H1 (cell line): ENCODE measurements at regions of chr11 and their contacts with region 1.

Region 1: DNA sequence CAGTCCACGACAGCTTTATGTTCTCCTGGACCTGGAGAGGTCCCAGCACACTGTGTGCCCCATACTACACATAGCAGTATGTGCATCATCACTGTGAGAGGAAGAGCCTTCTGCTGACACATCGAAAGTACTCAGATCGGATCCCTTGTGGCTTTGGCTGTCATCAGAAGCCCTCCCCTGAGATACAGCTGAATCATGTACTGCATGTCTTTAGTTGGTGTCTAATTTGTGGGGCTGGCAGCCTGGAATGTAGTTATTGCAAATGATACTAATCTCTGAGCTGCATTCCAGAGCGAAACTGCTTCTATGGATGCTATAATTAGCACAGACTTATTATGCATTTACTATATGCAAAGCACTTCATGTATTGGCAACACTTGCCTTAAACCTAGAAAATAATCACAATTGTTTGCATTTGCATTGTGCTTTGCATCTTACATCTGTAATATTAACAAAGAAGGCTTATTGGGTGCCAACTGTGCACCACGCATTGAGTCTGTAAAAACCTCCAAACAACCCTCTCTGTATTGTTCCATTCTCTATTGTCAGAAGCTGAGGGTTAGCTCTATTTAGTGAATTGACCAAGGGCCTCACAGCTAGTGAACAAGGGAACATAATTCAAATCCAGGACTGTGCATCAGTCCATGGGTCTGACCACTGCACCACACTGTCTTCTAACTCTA is 89.2 kb upstream of the CRTAM start:
- DNase-seq: no peak
- H3K4me3 ChIP-seq: no peak overlapping the region
- H3K27ac ChIP-seq: no peak overlapping the region
- H3K4me1 ChIP-seq: peaks cover 0 to 2% (median 0%) of the 10 kb centered on the region in 4 experiments; a peak in 1 of 7 replicates
- H3K27me3 ChIP-seq: peaks cover 0 to 5% (median 0%) of the 10 kb centered on the region in 4 experiments; a peak in 1 of 7 replicates
- CTCF ChIP-seq: no peak
- EP300 ChIP-seq: no peak
- POLR2A ChIP-seq: no peak
- RAD21 ChIP-seq: no peak

Region 2: GRCh38 chr11:122578168-122578825 is 170.8 kb before region 1 on chr11:
- CTCF ChIA-PET with region 1: no interaction called
- POLR2A ChIA-PET with region 1: no interaction called
- DNase-seq: no peak
- H3K4me3 ChIP-seq: no peak overlapping the region
- H3K27ac ChIP-seq: no peak overlapping the region
- H3K4me1 ChIP-seq: peaks cover 0 to 3% (median 0%) of the 10 kb centered on the region in 4 experiments; a peak in 2 of 7 replicates
- H3K27me3 ChIP-seq: no peaks in the 10 kb centered on the region
- CTCF ChIP-seq: peak in 2 of 3 experiments; percentile 17 to 27; a peak in 2 of 4 replicates
- EP300 ChIP-seq: no peak
- POLR2A ChIP-seq: no peak
- RAD21 ChIP-seq: peak; percentile 34 to 44

Region 3: DNA sequence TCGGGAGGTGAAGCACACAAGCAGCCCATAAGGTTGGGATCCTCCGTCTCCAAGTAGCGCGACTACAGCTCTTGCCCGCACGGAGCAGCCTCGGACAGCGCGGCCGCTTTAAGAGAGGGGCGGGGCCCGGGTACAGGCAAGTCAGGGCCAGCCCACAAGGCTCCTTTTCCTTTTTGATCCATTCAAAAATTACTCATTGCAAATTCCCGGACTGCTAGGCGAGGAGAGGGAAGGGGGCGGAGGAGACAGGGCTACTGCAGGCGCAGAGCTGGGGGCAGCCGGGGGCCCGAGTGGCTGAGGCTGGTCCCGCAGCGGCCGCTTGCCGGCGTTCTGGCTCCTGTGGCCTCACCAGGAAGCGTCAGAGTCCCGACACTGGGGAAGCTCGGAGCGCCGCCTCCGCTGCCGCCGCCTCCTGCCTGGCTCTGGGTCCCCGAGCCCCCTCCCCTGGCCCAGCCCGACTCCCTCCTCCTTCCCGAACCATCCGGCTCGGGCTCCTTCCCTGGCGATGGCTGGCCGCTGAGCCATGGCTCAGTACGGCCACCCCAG is 93.5 kb before region 1 on chr11 and contains the start of gene UBASH3B:
- CTCF ChIA-PET with region 1: interaction called, 21 read pairs
- POLR2A ChIA-PET with region 1: no interaction called
- DNase-seq: peak in 1 of 2 experiments; percentile 81
- H3K4me3 ChIP-seq: peak within 1 kb of the TSS; percentile 70 to 88 (median 72)
- H3K27ac ChIP-seq: no peak within 1 kb of the TSS
- H3K4me1 ChIP-seq: peaks cover 0 to 10% (median 3%) of the 10 kb centered on the region in 4 experiments; a peak in 6 of 7 replicates
- H3K27me3 ChIP-seq: peaks cover 0 to 21% (median 13%) of the 10 kb centered on the region in 4 experiments; a peak in 6 of 7 replicates
- CTCF ChIP-seq: 0 out of 4 replicates have a peak, but pooled peaks of 1 of the 3 experiments have one; percentile 10
- EP300 ChIP-seq: no peak
- POLR2A ChIP-seq: no peak
- RAD21 ChIP-seq: peak in 1 of 2 experiments; percentile 19; a peak in 1 of 4 replicates
- total RNA-seq, gene UBASH3B: 8.9 and 9.5 TPM in 2 replicates

Region 4: DNA sequence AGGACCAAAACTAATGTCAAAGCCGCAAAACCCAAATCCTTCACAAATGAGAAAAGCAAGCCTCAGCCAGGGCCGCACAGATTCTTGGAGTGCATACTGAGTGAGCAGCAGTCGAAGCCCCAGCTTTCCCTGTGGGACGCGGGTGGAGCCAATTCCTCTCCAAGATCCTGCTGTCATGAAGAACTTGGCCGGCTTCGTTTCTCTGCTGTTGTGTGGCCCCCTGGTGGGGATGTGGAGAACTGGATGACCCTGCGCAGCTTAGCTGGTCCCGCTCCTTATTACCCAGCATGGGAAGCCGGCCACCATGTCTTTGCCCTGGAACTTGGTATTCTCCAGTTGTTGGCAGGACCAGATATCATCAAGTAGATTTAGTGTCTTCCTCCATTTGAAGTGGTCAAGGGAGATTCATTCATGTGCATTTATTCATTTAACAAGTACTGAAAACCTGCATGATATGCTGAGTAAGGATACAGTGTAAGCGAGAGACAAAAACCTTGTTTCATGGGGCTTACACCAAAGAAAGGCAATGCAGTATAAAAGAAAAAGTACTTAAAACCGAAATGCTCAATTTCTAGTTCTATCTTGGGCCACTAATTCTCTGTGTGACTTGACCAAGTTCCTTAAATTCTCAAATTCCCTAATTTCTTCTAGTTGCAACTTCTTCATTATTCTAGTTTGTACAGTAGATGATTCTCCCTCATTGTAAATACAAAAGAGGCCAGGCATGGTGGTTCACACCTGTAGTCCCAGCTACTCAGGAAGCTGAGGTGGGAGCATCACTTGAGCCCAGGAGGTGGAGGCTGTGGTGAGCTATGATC is 32.4 kb after region 1 on chr11:
- CTCF ChIA-PET with region 1: interaction called, 356 read pairs
- POLR2A ChIA-PET with region 1: no interaction called
- DNase-seq: peak; percentile 77 to 95
- H3K4me3 ChIP-seq: no peak overlapping the region
- H3K27ac ChIP-seq: no peak overlapping the region
- H3K4me1 ChIP-seq: peaks cover 0 to 2% (median 0%) of the 10 kb centered on the region in 4 experiments; a peak in 4 of 7 replicates
- H3K27me3 ChIP-seq: no peaks in the 10 kb centered on the region
- CTCF ChIP-seq: peak; percentile 81 to 95 (median 93)
- EP300 ChIP-seq: no peak
- POLR2A ChIP-seq: no peak
- RAD21 ChIP-seq: peak; percentile 89 to 94